ENCODE measurements at regions of chr2 and their contacts with region 1.

Region 1: DNA sequence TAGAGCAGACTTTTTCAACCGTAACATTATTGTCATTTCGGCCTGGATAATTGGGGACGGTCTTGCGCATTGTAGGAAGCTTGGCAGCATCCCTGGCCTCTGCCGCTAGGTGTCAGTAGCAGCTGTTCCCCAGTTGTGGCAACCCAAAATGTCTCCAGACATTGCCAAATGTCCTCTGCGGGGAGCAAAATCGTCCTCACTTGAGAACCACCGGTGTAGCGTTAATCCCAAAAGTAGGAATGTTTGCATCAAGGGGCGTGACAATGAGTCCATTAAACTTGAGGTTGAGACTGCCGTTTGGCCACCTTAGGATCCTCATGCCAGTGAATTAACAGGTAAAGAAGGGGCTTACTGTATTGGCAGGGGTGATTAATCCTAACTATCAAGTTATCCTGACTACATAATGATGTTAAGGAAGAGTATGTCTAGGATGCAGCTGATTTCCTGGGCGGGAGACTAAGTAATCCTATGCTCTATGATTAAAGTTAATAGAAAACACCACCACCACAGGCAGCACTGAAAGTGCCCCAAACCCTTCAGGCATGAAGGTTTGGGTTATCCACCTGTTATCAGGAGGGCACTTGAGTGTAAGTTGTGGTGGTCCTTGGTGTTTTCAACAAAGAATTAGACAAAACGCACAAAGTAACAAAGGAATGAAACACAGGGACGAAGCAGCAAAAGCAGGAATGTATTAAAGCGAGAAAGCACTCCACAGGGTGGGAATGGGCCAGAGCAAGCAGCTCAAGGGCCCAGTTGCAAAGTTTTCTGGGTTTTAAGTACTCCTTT is 4.9 kb upstream of the ZC3H8 start:
- DNase-seq: peak; percentile 86
- H3K4me3 Mint-ChIP-seq: no peak overlapping the region
- H3K27ac Mint-ChIP-seq: no peak overlapping the region
- H3K4me1 Mint-ChIP-seq: peaks cover 23% of the 10 kb centered on the region
- H3K27me3 Mint-ChIP-seq: peaks cover 6% of the 10 kb centered on the region

Region 2: DNA sequence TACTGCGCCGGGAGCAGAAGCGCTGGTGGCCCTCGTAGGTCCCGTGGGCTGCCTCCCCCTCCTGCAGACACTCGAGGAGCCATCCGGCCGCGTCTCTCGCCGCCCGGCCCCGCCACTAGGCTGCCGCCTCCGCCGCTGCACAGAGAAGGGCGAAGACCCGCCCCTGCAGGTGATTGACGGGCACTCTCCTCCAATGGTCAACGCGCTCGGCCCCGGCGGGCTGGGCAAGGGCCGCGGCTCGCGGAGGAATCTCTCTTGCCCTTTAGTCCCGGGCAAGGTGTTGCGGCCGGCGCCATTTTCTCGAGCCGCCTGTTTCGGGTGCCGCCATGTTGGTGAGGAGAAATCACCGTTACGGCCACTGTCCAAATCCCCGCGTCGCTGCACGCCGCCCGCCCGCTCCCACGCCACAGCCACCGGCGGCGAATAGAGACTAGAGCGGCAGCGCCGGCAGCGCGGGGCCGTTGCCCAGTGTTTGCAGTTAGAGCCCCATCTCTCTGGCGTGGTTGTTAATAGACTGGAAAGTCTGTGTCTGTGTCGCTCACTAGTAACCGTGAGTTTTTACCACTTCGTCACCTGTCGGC is 15.7 kb after region 1 on chr2 and contains the start of gene ZC3H6:
- CTCF ChIA-PET with region 1: interaction called, 10 read pairs
- POLR2A ChIA-PET with region 1: interaction called, 28 read pairs
- DNase-seq: peak; percentile 99
- H3K4me3 Mint-ChIP-seq: peak within 1 kb of the TSS; percentile 91
- H3K27ac Mint-ChIP-seq: peak within 1 kb of the TSS; percentile 95
- H3K4me1 Mint-ChIP-seq: peaks cover 10% of the 10 kb centered on the region
- H3K27me3 Mint-ChIP-seq: no peaks in the 10 kb centered on the region
- total RNA-seq, gene ZC3H6: 13.5 to 14.7 TPM

Measured in activated CD4-positive, alpha-beta memory T cell treated with anti-CD3 and anti-CD28 coated beads, Interleukin-2, amount 10 ng/mL, durations not matched to agents 7 days and 5 days (primary cell).